Psoas muscle (tissue), 8 donors: ENCODE measurements at regions of chr20 and their contacts with region 1.

Region 1: GRCh38 chr20:37901654-37902503 is 1.0 kb upstream of the VSTM2L start:
- DNase-seq: no peak
- ATAC-seq: peak; percentile 42 to 77 (median 64)
- H3K4me3 ChIP-seq: peak overlapping the region; percentile 62
- H3K27ac ChIP-seq: no peak overlapping the region
- H3K4me1 ChIP-seq: peaks cover 6% of the 10 kb centered on the region
- H3K27me3 ChIP-seq: peaks cover 0 to 57% (median 31%) of the 10 kb centered on the region in 3 donors
- CTCF ChIP-seq: peak; percentile 34

Region 2: DNA sequence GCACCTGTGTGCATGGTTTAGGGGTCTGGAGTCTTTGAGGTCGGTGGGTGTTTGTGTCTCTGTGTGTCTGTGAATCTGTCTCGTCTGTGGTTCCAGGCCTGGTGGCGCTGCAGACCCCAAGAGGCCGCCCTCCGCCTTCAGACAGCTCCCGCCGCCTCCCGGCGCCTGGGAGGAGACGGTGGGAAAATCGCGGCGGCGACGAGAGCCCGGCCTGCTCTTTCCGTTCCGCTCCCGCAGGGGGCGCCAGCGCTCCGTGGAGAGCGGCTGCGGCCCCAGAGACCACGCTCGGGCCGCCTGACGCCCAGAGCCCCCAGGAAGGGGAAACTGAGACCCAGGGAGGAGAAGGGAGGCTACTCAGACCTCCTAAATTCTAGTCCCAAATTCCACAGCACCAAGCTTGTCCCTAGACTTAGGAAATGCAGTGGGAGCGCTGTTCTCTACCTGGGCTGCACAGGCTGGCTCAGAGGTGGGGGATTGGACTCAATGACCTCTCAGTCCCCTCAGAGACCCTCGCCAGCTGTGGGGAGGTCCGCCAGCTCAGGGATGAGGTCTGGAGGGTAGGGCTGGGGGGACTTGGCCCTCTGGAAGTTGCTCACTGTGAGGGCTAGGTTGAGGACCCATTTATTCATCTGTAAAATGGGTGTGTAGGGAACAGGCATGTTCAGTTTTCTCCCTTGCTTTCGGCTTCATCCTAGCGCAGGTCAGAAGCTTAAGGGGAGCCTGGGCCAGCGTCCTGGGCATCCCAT is 337.3 kb before region 1 on chr20:
- intact Hi-C with region 1: loop called in 1 of 2 experiments (anchors 10 kb)
- DNase-seq: peak; percentile 37 to 66
- ATAC-seq: peak; percentile 72 to 91 (median 82)
- H3K4me3 ChIP-seq: no peak overlapping the region
- H3K27ac ChIP-seq: no peak overlapping the region
- H3K4me1 ChIP-seq: no peaks in the 10 kb centered on the region
- H3K27me3 ChIP-seq: peaks cover 0 to 44% (median 8%) of the 10 kb centered on the region in 3 donors
- CTCF ChIP-seq: peak; percentile 89

Region 3: GRCh38 chr20:37758332-37758731 is 143.5 kb before region 1 on chr20:
- intact Hi-C with region 1: loop called in 1 of 2 experiments (anchors 5 kb)
- DNase-seq: no peak
- ATAC-seq: peak in 1 of 4 donors; percentile 25
- H3K4me3 ChIP-seq: no peak overlapping the region
- H3K27ac ChIP-seq: no peak overlapping the region
- H3K4me1 ChIP-seq: peaks cover 11% of the 10 kb centered on the region
- H3K27me3 ChIP-seq: no peaks in the 10 kb centered on the region
- CTCF ChIP-seq: no peak